ENCODE measurements at regions of chr1 and their contacts with region 1.

Region 1: DNA sequence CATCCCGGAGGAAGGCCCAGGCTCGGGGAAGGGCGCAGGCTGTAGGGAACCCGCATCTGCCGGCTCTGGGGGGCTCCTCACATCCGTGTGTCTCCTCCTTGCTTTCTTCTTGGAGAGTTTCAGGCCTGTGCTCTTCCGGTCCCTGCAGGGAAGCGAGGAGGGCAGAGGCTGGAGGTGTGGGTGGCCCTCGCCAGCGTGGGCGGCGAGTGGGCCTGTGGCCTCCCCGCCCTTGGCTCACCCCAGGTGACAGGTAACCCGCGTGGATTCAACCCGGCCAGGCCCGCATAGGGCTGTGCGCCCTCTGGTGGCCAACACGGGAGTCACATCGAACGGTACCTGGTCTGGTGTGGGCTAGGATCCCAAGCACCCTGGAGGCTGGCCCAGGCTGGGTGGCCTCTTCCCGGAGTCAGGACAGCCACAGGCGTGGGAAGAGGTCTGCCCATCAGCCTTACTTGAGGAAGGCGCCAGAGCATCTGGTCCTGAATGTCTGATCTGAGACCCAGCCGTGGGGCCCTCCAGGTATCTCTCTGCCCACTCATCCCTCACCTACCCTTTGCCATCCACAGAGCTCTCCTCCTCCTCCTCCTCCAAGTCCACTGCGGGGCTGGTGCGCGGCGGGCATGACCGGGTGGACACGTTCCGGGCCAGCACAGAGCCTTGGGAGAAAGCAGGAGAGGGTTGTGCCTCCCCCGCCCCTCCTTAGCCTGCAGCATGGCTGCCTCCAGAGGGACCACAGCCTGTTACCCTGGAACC is 9.6 kb upstream of the TNFRSF25 start:
- DNase-seq: peak; percentile 80
- ATAC-seq: peak; percentile 34
- H3K4me3 Mint-ChIP-seq: no peak overlapping the region
- H3K27ac Mint-ChIP-seq: no peak overlapping the region
- H3K4me1 Mint-ChIP-seq: peaks cover 34% of the 10 kb centered on the region
- H3K27me3 Mint-ChIP-seq: no peaks in the 10 kb centered on the region
- CTCF ChIP-seq: peak; percentile 97

Region 2: DNA sequence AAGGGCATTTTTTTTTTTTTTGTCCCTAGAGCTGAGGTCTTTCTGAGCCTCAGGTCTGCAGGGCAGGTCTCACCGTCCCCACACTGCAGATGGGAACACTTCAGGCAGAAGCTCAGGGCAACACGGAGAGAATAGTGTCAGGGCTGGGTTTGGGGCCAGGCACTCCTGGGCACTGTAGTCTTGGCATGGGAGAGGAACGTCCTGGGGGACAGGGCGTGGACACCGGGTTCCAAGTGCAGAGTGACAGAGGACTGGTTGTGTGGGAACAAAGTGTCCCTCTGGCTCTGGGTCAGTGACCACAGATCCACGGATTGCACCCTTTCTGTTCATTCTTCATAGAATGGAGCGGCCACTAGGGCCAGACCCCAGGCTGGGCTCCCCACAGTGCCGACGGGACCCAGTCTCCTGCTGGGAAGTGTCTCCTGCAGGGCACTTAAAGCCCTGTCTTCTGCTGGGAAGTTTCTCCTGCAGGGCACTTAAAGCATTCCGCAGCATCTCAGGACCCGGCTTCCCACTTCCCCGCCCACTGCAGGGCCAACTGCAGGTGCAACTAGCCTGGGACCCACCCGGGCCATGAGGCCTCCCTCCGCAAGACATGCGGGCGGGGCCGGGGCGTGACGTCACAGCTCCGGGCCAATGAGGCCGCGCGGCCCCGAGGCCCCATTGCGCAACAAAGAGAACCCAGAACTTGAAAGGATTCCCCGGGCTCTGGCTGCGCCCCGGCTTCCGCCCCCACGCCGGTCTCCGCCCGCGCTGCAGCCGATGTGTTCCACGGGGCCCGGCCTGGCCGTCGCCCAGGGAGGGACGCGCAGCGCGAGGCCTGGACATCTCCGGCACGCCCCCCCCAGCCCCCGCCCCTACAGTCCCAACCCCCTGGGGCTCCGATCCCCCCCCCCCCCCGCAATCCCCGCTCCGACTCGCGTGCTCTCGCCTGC is 215.8 kb before region 1 on chr1:
- CTCF ChIA-PET with region 1: no interaction called
- POLR2A ChIA-PET with region 1: no interaction called
- DNase-seq: peak; percentile 90
- ATAC-seq: peak; percentile 40
- H3K4me3 Mint-ChIP-seq: peak overlapping the region; percentile 49
- H3K27ac Mint-ChIP-seq: no peak overlapping the region
- H3K4me1 Mint-ChIP-seq: peaks cover 9% of the 10 kb centered on the region
- H3K27me3 Mint-ChIP-seq: peaks cover 21% of the 10 kb centered on the region
- CTCF ChIP-seq: no peak

Region 3: GRCh38 chr1:6367381-6368012 is 108.1 kb before region 1 on chr1:
- CTCF ChIA-PET with region 1: no interaction called
- POLR2A ChIA-PET with region 1: no interaction called
- DNase-seq: no peak
- ATAC-seq: no peak
- H3K4me3 Mint-ChIP-seq: no peak overlapping the region
- H3K27ac Mint-ChIP-seq: peak overlapping the region; percentile 45; the same call in 1 of the 2 replicates
- H3K4me1 Mint-ChIP-seq: peaks cover 10% of the 10 kb centered on the region
- H3K27me3 Mint-ChIP-seq: no peaks in the 10 kb centered on the region
- CTCF ChIP-seq: no peak

Region 4: GRCh38 chr1:6445062-6445763 is 30.3 kb before region 1 on chr1:
- CTCF ChIA-PET with region 1: interaction called, 73 read pairs
- POLR2A ChIA-PET with region 1: no interaction called
- DNase-seq: peak; percentile 78
- ATAC-seq: peak; percentile 14
- H3K4me3 Mint-ChIP-seq: no peak overlapping the region
- H3K27ac Mint-ChIP-seq: peak overlapping the region; percentile 58
- H3K4me1 Mint-ChIP-seq: peaks cover 37% of the 10 kb centered on the region
- H3K27me3 Mint-ChIP-seq: peaks cover 17% of the 10 kb centered on the region
- CTCF ChIP-seq: peak; percentile 49; the same call in 1 of the 2 replicates

Region 5: DNA sequence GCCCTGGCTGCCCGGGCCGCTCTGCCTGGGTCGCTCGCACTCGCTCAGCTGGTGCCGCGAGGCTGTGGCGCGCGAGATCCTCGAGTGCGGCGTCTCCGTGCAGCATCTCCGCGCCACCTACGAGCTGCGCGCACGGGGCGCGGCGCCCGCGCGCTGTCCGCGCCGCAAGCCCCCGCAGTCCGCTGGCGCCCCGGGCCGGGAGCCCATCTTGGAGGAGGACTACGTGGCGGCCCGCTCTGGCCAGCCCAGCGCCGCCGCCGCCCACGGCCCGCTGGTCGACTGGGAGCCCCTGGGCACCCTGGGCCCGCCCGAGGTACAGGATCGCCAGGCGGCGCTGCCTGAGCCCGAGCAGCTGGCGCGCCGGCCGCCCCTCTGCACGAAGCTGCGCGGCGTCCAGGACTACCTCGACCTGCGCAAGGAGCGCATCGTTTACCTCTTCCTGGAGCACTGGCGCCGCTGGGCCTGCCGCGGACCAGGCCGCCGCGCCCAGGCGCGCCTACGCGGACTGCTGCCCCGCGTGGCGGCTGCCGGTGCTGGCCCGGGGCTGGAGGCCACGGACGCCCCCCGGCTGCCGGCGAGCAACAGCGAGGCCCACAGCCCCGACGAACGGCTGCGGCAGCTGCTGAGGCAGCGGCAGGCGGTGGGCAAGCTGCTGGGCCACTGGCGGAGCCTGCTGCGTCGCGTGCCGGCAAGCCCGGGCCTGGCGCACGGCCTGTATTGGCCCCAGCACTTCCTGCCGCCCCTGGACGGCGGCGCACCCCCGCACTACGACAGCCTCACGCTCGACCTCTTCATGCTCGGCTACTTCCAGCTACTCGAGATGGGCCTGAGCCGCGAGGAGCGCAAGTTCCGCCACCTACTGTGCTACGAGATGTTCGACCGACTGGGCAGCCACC is 20.5 kb before region 1 on chr1:
- CTCF ChIA-PET with region 1: interaction called, 71 read pairs
- POLR2A ChIA-PET with region 1: interaction called, 5 read pairs
- DNase-seq: peak; percentile 52
- ATAC-seq: peak; percentile 46
- H3K4me3 Mint-ChIP-seq: no peak overlapping the region
- H3K27ac Mint-ChIP-seq: no peak overlapping the region
- H3K4me1 Mint-ChIP-seq: peaks cover 19% of the 10 kb centered on the region
- H3K27me3 Mint-ChIP-seq: no peaks in the 10 kb centered on the region
- CTCF ChIP-seq: no peak

Region 6: DNA sequence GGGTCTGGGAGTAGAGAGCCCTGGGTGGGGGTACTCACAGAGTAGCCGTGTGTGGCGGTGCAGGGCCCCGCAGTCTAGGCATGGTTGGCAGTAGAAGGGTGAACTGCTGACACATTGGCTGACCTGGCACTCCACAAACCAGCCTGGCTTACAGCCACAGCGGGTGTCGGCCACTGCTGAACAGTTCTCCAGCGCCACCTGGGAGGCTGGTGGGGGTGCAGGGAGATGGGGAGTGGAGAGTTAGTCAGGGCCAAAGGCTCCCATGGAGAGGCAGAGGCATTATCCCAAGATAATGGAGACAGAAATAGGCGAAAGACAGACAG is 11.1 kb before region 1 on chr1:
- CTCF ChIA-PET with region 1: interaction called, 28 read pairs
- POLR2A ChIA-PET with region 1: interaction called, 5 read pairs
- DNase-seq: no peak
- ATAC-seq: no peak
- H3K4me3 Mint-ChIP-seq: peak overlapping the region; percentile 13; the same call in 1 of the 2 replicates
- H3K27ac Mint-ChIP-seq: peak overlapping the region; percentile 49; the same call in 1 of the 2 replicates
- H3K4me1 Mint-ChIP-seq: peaks cover 20% of the 10 kb centered on the region
- H3K27me3 Mint-ChIP-seq: peaks cover 2% of the 10 kb centered on the region; the same call in 1 of the 2 replicates
- CTCF ChIP-seq: no peak

Region 7: GRCh38 chr1:6570100-6570499 is 94.5 kb after region 1 on chr1:
- CTCF ChIA-PET with region 1: no interaction called
- POLR2A ChIA-PET with region 1: no interaction called
- DNase-seq: no peak
- ATAC-seq: no peak
- H3K4me3 Mint-ChIP-seq: no peak overlapping the region
- H3K27ac Mint-ChIP-seq: no peak overlapping the region
- H3K4me1 Mint-ChIP-seq: no peaks in the 10 kb centered on the region
- H3K27me3 Mint-ChIP-seq: peaks cover 31% of the 10 kb centered on the region
- CTCF ChIP-seq: no peak

Measured in WTC11 (cell line).